Left cardiac atrium (tissue), 4 donors: ENCODE measurements at regions of chr2 and their contacts with region 1.

Region 1: GRCh38 chr2:172397148-172397834 is 30.1 kb upstream of the ITGA6 start:
- DNase-seq: no peak
- ATAC-seq: peak in 1 of 2 donors; percentile 30

Region 2: GRCh38 chr2:171754254-171754939 is 642.9 kb before region 1 on chr2:
- intact Hi-C with region 1: no loop called
- DNase-seq: no peak
- ATAC-seq: no peak

Region 3: GRCh38 chr2:172339371-172340010 is 57.8 kb before region 1 on chr2:
- intact Hi-C with region 1: loop called in 1 of 2 experiments (anchors 5 kb)
- DNase-seq: no peak
- ATAC-seq: peak; percentile 36 to 41